ENCODE measurements at regions of chr14 and their contacts with region 1.

Region 1: GRCh38 chr14:61269321-61270083 is 11.6 kb downstream of the TMEM30B start:
- DNase-seq: peak; percentile 72
- CTCF ChIP-seq: peak; percentile 88

Region 2: GRCh38 chr14:61188978-61189808 is 80.3 kb before region 1 on chr14:
- CTCF ChIA-PET with region 1: no interaction called
- POLR2A ChIA-PET with region 1: no interaction called
- DNase-seq: peak; percentile 69
- CTCF ChIP-seq: peak; percentile 59

Region 3: DNA sequence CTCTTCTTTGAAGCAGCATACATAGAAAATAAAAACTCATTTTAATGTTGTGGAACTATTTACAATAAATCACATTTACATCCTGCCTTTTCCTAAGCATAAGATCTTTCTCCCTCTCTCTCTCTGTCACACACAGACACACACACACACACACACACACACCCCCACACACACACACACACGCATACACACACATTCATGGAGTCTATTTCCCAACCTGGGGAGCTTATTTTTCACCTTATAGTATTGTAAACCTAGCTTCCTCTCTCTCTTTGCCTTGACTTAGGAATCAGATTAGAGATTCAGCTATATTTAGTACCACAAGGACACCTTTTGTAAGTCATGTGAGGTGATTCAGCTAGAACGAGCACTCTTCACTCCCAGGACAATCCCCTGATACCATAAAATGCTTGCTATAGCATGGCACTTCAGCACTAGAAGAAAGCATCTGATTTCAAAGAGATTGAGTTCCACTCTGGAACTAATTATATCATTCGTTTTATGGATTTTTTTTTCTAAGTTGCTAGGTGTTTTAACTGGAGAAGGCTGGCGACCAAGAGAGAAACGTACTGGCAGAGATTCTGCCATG is 11.9 kb before region 1 on chr14:
- CTCF ChIA-PET with region 1: interaction called, 13 read pairs
- POLR2A ChIA-PET with region 1: no interaction called
- DNase-seq: no peak
- CTCF ChIP-seq: no peak

Region 4: GRCh38 chr14:61280526-61281185 is 11.2 kb after region 1 on chr14:
- CTCF ChIA-PET with region 1: interaction called, 11 read pairs
- POLR2A ChIA-PET with region 1: no interaction called
- DNase-seq: peak; percentile 46
- CTCF ChIP-seq: peak; percentile 1

Region 5: DNA sequence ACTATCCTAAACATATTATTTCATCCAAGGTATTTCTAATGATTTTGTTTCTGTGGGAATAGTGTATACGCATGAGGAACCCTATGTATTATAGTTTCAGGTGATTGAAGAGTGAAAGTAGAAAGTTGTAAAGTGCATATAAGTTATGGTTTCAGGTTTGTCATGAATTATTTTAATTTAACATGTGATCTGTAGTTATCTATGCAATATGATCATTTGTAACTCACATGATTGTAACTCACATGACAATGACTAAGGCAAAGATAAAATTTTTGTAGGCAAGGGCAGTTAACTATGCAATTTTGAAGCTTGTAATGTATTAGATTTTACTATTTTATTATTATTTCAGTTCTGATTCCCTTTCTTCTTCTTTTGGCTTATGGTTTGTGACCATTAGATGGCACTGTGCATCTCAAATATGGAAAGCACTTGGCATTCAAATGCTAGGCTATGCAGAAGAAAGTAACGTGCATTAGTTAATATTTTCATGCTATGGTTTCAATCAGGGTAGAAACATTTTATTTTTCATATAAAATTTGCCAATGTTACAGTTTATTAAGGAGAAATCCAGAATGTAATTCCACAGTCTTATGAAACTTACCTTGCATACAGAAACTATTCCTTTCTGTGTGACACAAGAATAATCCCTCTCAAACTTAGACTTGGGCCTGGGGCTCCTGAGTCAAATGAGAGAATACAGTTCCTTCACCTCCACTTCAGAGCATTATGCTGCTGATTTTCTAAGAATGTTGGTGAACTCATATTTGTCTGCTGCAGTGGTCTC is 27.4 kb after region 1 on chr14:
- CTCF ChIA-PET with region 1: interaction called, 10 read pairs
- POLR2A ChIA-PET with region 1: no interaction called
- DNase-seq: peak; percentile 38
- CTCF ChIP-seq: peak; percentile 68

Region 6: GRCh38 chr14:61420326-61420725 is 150.8 kb after region 1 on chr14:
- CTCF ChIA-PET with region 1: no interaction called
- POLR2A ChIA-PET with region 1: no interaction called
- DNase-seq: no peak
- CTCF ChIP-seq: no peak

Measured in GM10248 (cell line).